PC-3 (cell line): ENCODE measurements at regions of chr14 and their contacts with region 1.

Region 1: DNA sequence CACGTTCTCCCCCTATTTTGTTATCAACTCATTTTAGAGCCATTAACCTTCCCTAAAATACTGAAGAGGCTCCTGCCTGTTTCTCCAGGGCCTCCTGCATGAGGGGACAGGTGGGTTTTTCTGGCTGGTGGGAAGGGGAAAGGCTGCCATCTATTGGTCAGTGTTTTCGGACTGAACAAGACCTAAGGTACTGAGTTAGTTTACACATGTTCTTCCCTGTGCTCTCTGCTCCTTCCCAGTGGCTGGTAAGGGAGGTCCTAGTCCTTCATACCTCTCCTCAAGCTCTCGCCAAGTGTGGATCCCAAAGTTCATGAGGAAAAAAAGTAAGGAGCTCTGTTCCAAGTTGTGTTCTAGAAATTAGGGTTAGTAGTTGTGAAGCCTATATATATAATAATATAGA is 357.5 kb downstream of the FSCB start:
- DNase-seq: peak; percentile 66
- ATAC-seq: peak; percentile 98
- H3K4me3 ChIP-seq: no peak overlapping the region
- H3K27ac ChIP-seq: no peak overlapping the region
- H3K4me1 ChIP-seq: no peaks in the 10 kb centered on the region
- H3K27me3 ChIP-seq: no peaks in the 10 kb centered on the region
- CTCF ChIP-seq: peak; percentile 76

Region 2: DNA sequence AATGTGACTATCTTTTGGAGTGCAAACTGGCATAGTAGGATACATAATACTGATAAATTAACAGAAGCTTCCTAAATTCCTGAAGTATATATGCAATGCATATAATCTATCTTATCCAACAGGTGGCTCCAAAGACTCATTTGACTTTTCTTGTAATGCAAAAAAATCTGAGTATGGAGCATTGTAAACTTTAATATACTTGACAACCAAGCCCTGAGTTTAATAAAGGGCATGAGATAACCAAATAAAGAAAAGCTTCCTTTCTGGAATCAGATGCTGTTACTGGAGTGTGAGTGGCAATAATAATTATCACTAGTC is 646.0 kb before region 1 on chr14:
- CTCF ChIA-PET with region 1: no interaction called
- POLR2A ChIA-PET with region 1: no interaction called
- intact Hi-C with region 1: loop called (anchors 2 kb)
- DNase-seq: peak; percentile 45
- ATAC-seq: peak; percentile 92
- H3K4me3 ChIP-seq: no peak overlapping the region
- H3K27ac ChIP-seq: no peak overlapping the region
- H3K4me1 ChIP-seq: no peaks in the 10 kb centered on the region
- H3K27me3 ChIP-seq: no peaks in the 10 kb centered on the region
- CTCF ChIP-seq: peak; percentile 61

Region 3: DNA sequence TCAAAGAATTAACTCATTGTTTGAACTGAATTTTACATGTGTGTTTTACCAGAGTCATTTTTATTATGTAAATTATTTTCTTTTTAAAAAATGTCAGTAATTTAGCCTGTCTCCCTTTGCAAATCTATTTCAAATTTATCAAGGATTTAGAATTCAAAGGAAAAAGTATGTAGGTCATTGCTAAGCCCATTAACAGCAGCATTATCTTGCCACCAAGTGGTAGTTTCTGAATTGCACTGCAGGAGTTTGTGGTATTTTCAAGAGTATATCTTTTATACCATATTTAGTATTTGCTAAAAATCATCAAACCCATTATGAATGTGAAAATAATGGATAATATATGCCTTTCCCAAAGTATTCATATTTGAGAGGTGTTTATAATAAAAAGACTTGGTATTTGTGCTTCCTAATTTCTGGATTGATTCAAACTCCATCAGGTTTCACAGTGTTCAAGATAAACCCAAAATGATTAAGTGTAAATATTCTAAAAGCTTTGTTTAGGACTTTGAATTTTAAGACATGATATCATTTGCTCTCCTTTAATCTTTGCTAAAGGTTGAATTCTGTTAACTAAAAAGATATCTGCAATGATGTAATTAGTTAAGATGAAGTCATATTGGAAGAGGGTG is 353.9 kb before region 1 on chr14:
- CTCF ChIA-PET with region 1: no interaction called
- POLR2A ChIA-PET with region 1: no interaction called
- intact Hi-C with region 1: loop called (anchors 2 kb)
- DNase-seq: peak; percentile 51
- ATAC-seq: peak; percentile 73
- H3K4me3 ChIP-seq: no peak overlapping the region
- H3K27ac ChIP-seq: no peak overlapping the region
- H3K4me1 ChIP-seq: no peaks in the 10 kb centered on the region
- H3K27me3 ChIP-seq: no peaks in the 10 kb centered on the region
- CTCF ChIP-seq: peak; percentile 63

Region 4: GRCh38 chr14:43894534-43894933 is 255.1 kb before region 1 on chr14:
- CTCF ChIA-PET with region 1: no interaction called
- POLR2A ChIA-PET with region 1: no interaction called
- intact Hi-C with region 1: loop called (anchors 10 kb)
- DNase-seq: peak; percentile 56
- ATAC-seq: peak; percentile 49; the same call in 1 of the 2 replicates
- H3K4me3 ChIP-seq: no peak overlapping the region
- H3K27ac ChIP-seq: no peak overlapping the region
- H3K4me1 ChIP-seq: 0 out of 2 replicates have a peak, but pooled peaks cover 4% of the 10 kb centered on the region
- H3K27me3 ChIP-seq: no peaks in the 10 kb centered on the region
- CTCF ChIP-seq: peak; percentile 83

Region 5: DNA sequence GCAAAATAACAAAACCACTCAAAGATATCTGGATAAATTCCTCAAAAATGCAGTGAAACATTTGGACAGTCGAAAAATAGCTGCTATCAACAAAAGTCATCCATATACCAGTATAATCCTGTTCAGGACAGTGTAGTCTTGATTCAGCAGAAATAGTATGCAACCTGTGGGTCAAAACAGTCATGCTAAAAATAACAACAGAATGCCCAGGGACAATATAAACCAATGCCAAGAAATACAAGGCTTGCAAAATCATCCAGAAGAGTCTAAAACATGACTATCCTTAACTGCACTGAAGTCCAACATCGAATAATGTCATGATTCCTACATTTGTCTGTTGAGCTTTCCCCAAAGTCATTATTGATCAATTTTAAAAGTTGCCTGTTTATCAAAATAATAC is 68.5 kb before region 1 on chr14:
- CTCF ChIA-PET with region 1: no interaction called
- POLR2A ChIA-PET with region 1: no interaction called
- intact Hi-C with region 1: no loop called
- DNase-seq: no peak
- ATAC-seq: no peak
- H3K4me3 ChIP-seq: no peak overlapping the region
- H3K27ac ChIP-seq: no peak overlapping the region
- H3K4me1 ChIP-seq: no peaks in the 10 kb centered on the region
- H3K27me3 ChIP-seq: no peaks in the 10 kb centered on the region
- CTCF ChIP-seq: no peak

Region 6: GRCh38 chr14:44317434-44317746 is 167.8 kb after region 1 on chr14:
- CTCF ChIA-PET with region 1: no interaction called
- POLR2A ChIA-PET with region 1: no interaction called
- intact Hi-C with region 1: no loop called
- DNase-seq: no peak
- ATAC-seq: 0 out of 2 replicates have a peak, but pooled peaks have one; percentile 9
- H3K4me3 ChIP-seq: no peak overlapping the region
- H3K27ac ChIP-seq: peak overlapping the region; percentile 83
- H3K4me1 ChIP-seq: peaks cover 5% of the 10 kb centered on the region
- H3K27me3 ChIP-seq: no peaks in the 10 kb centered on the region
- CTCF ChIP-seq: no peak

Region 7: GRCh38 chr14:44803239-44803905 is 653.8 kb after region 1 on chr14:
- CTCF ChIA-PET with region 1: no interaction called
- POLR2A ChIA-PET with region 1: no interaction called
- intact Hi-C with region 1: loop called (anchors 5 kb)
- DNase-seq: peak; percentile 77
- ATAC-seq: peak; percentile 95
- H3K4me3 ChIP-seq: no peak overlapping the region
- H3K27ac ChIP-seq: no peak overlapping the region
- H3K4me1 ChIP-seq: no peaks in the 10 kb centered on the region
- H3K27me3 ChIP-seq: no peaks in the 10 kb centered on the region
- CTCF ChIP-seq: peak; percentile 90

Region 8: GRCh38 chr14:44846232-44846824 is 696.7 kb after region 1 on chr14:
- CTCF ChIA-PET with region 1: no interaction called
- POLR2A ChIA-PET with region 1: no interaction called
- intact Hi-C with region 1: loop called (anchors 5 kb)
- DNase-seq: peak; percentile 75
- ATAC-seq: peak; percentile 68
- H3K4me3 ChIP-seq: peak overlapping the region; percentile 6; the same call in 1 of the 2 replicates
- H3K27ac ChIP-seq: no peak overlapping the region
- H3K4me1 ChIP-seq: no peaks in the 10 kb centered on the region
- H3K27me3 ChIP-seq: 0 out of 2 replicates have a peak, but pooled peaks cover 4% of the 10 kb centered on the region
- CTCF ChIP-seq: peak; percentile 96